Activated B cell treated with CpG ODN at 0.5 μM for 24 hours (primary cell): ENCODE measurements at regions of chr3 and their contacts with region 1.

Region 1: GRCh38 chr3:4978204-4978965 is 852 bp upstream of the BHLHE40 start:
- DNase-seq: peak; percentile 79
- ATAC-seq: peak; percentile 49
- H3K4me3 Mint-ChIP-seq: peak overlapping the region; percentile 96
- H3K27ac Mint-ChIP-seq: peak overlapping the region; percentile 97
- H3K4me1 Mint-ChIP-seq: peaks cover 63% of the 10 kb centered on the region
- H3K27me3 Mint-ChIP-seq: no peaks in the 10 kb centered on the region
- CTCF ChIP-seq: no peak

Region 2: GRCh38 chr3:4712143-4712542 is 266.2 kb before region 1 on chr3:
- CTCF ChIA-PET with region 1: interaction called, 72 read pairs
- POLR2A ChIA-PET with region 1: interaction called, 25 read pairs
- intact Hi-C with region 1: loop called (anchors 1 kb)
- DNase-seq: no peak
- ATAC-seq: no peak
- H3K4me3 Mint-ChIP-seq: no peak overlapping the region
- H3K27ac Mint-ChIP-seq: no peak overlapping the region
- H3K4me1 Mint-ChIP-seq: peaks cover 2% of the 10 kb centered on the region
- H3K27me3 Mint-ChIP-seq: no peaks in the 10 kb centered on the region
- CTCF ChIP-seq: no peak

Region 3: GRCh38 chr3:4845882-4846281 is 132.5 kb before region 1 on chr3:
- CTCF ChIA-PET with region 1: interaction called, 4 read pairs
- POLR2A ChIA-PET with region 1: interaction called, 68 read pairs
- intact Hi-C with region 1: loop called (anchors 1 kb)
- DNase-seq: no peak
- ATAC-seq: peak; percentile 66
- H3K4me3 Mint-ChIP-seq: peak overlapping the region; percentile 16
- H3K27ac Mint-ChIP-seq: peak overlapping the region; percentile 69
- H3K4me1 Mint-ChIP-seq: peaks cover 72% of the 10 kb centered on the region
- H3K27me3 Mint-ChIP-seq: no peaks in the 10 kb centered on the region
- CTCF ChIP-seq: no peak

Region 4: GRCh38 chr3:5006755-5007202 is 28.4 kb after region 1 on chr3:
- CTCF ChIA-PET with region 1: interaction called, 65 read pairs
- POLR2A ChIA-PET with region 1: interaction called, 478 read pairs
- intact Hi-C with region 1: loop called (anchors 1 kb)
- DNase-seq: peak; percentile 58
- ATAC-seq: peak; percentile 62
- H3K4me3 Mint-ChIP-seq: peak overlapping the region; percentile 62
- H3K27ac Mint-ChIP-seq: peak overlapping the region; percentile 84
- H3K4me1 Mint-ChIP-seq: peaks cover 67% of the 10 kb centered on the region
- H3K27me3 Mint-ChIP-seq: no peaks in the 10 kb centered on the region
- CTCF ChIP-seq: no peak

Region 5: DNA sequence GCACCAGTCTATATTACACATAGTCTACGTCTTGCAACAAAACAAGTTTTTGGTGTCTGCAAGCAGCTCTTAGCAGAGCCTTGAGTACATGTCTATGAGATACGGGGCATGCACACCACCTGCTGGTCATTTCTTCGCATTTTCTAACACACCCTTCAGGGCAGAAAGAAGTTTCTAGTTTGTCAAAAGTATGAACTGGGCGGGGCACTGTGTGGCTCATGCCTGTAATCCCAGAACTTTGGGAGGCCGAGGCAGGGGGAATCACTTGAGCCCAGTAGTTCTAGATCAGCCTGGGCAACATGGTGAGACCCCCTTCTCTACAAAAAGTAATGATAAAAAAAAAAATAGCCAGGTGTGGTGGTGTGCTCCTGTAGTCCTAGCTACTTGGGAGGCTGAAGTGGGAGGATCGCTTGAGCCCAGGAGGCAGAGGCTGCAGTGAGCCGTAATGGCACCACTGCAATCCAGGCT is 79.5 kb after region 1 on chr3:
- CTCF ChIA-PET with region 1: interaction called, 9 read pairs
- POLR2A ChIA-PET with region 1: interaction called, 16 read pairs
- intact Hi-C with region 1: loop called (anchors 1 kb)
- DNase-seq: peak; percentile 38
- ATAC-seq: peak; percentile 90
- H3K4me3 Mint-ChIP-seq: no peak overlapping the region
- H3K27ac Mint-ChIP-seq: peak overlapping the region; percentile 3
- H3K4me1 Mint-ChIP-seq: peaks cover 42% of the 10 kb centered on the region
- H3K27me3 Mint-ChIP-seq: no peaks in the 10 kb centered on the region
- CTCF ChIP-seq: peak; percentile 26

Region 6: GRCh38 chr3:5194341-5195159 is 216.2 kb after region 1 on chr3:
- CTCF ChIA-PET with region 1: no interaction called
- POLR2A ChIA-PET with region 1: interaction called, 20 read pairs
- intact Hi-C with region 1: no loop called
- DNase-seq: no peak
- ATAC-seq: peak; percentile 55
- H3K4me3 Mint-ChIP-seq: peak overlapping the region; percentile 62
- H3K27ac Mint-ChIP-seq: peak overlapping the region; percentile 89
- H3K4me1 Mint-ChIP-seq: peaks cover 94% of the 10 kb centered on the region
- H3K27me3 Mint-ChIP-seq: no peaks in the 10 kb centered on the region
- CTCF ChIP-seq: no peak